ENCODE measurements at regions of chr4 and their contacts with region 1.

Region 1: GRCh38 chr4:177441803-177442622 is at the start of gene AGA:
- DNase-seq: peak; percentile 98
- H3K4me3 Mint-ChIP-seq: peak within 1 kb of the TSS; percentile 95
- H3K27ac Mint-ChIP-seq: peak within 1 kb of the TSS; percentile 97
- H3K4me1 Mint-ChIP-seq: peaks cover 27% of the 10 kb centered on the region
- H3K27me3 Mint-ChIP-seq: no peaks in the 10 kb centered on the region
- total RNA-seq, gene AGA: 15.1 and 15.6 TPM in 2 replicates

Region 2: GRCh38 chr4:177147668-177148067 is 294.3 kb before region 1 on chr4:
- intact Hi-C with region 1: no loop called
- DNase-seq: no peak
- H3K4me3 Mint-ChIP-seq: no peak overlapping the region
- H3K27ac Mint-ChIP-seq: no peak overlapping the region
- H3K4me1 Mint-ChIP-seq: no peaks in the 10 kb centered on the region
- H3K27me3 Mint-ChIP-seq: no peaks in the 10 kb centered on the region

Region 3: GRCh38 chr4:177367336-177367735 is 74.7 kb before region 1 on chr4:
- intact Hi-C with region 1: loop called (anchors 1 kb)
- DNase-seq: peak; percentile 77
- H3K4me3 Mint-ChIP-seq: no peak overlapping the region
- H3K27ac Mint-ChIP-seq: no peak overlapping the region
- H3K4me1 Mint-ChIP-seq: peaks cover 5% of the 10 kb centered on the region
- H3K27me3 Mint-ChIP-seq: no peaks in the 10 kb centered on the region

Region 4: GRCh38 chr4:177401658-177402273 is 40.2 kb before region 1 on chr4:
- intact Hi-C with region 1: loop called (anchors 2 kb)
- DNase-seq: peak; percentile 61
- H3K4me3 Mint-ChIP-seq: peak overlapping the region; percentile 65
- H3K27ac Mint-ChIP-seq: peak overlapping the region; percentile 60
- H3K4me1 Mint-ChIP-seq: peaks cover 39% of the 10 kb centered on the region
- H3K27me3 Mint-ChIP-seq: peaks cover 13% of the 10 kb centered on the region

Measured in activated CD4-positive, alpha-beta T cell treated with anti-CD3 and anti-CD28 coated beads, Interleukin-2, amount 10 ng/mL, durations not matched to agents 24 days and 14 days (primary cell).